ENCODE measurements at regions of chr5 and their contacts with region 1.

Region 1: DNA sequence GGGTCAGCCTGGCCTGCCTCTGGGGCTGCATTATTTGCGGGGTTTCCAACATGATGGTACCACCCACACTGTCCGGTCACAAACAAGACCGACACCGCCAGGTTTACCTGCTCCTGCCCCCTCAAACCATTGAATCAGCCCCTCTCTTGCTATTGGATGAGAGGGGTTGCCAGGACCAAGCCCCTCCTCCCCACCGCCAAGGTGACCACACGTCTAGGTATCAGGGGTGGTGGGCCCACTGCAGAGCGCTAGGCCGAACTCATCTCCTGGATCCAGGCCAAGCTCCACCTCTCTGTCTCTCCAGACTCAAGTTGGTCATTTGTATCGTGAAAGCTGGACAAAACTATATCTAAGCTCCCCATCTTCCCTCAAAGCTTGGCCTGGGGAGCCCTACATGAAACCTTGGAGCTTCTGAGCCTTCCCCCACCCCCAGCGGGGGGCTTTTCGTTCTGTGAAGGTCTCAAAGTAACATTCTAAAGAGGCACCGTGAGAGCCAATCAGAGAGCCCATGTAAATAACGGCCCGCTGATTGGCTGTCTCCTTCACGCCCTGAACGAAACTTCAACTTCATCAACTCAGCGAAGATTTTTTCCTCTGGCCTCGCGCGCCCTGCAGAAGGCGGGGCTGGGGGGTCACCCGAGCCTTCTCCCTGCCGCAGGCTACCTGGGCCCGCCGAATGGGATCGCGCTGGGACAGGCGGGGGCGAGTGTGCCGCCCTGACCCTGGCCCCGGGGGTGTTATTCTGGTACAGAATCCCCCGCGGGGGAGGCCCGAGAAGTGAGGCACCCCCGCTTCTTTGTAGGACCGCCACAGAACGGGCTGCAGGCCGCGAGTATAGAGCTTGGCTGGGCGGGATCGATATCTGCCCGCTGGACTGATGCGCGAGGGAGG is 49.6 kb upstream of the PSD2 start:
- H3K4me3 Mint-ChIP-seq: no peak overlapping the region
- H3K27ac Mint-ChIP-seq: no peak overlapping the region
- H3K4me1 Mint-ChIP-seq: peaks cover 53% of the 10 kb centered on the region
- H3K27me3 Mint-ChIP-seq: peaks cover 85% of the 10 kb centered on the region

Region 2: DNA sequence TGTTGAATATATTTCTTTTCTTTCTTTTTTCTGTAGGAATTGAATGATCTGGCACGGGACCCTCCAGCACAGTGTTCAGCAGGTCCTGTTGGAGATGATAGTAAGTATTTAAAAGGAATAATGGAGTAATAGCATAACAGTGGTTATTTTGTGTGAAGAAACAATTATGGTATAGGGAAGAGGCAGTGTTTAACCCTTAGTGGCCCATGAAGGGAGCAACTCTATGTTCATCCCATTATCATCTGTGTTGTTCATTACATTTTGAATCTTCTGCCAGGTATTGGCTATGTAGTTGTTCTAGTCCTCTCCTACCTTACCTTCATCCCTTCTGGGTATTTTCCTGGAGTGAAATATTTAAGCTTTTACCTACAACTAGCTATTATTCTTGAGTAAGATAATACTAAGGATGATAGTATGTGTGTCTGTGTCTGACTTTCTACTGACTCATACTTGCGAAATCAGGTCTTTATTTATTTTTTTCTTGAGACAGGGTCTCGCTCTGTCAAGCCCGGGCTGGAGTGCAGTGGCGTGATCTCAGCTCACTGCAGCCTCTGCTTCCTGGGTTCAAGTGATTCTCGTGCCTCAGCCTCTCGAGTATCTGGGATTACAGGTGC is 145.6 kb before region 1 on chr5:
- intact Hi-C with region 1: no loop called
- H3K4me3 Mint-ChIP-seq: no peak overlapping the region
- H3K27ac Mint-ChIP-seq: no peak overlapping the region
- H3K4me1 Mint-ChIP-seq: no peaks in the 10 kb centered on the region
- H3K27me3 Mint-ChIP-seq: no peaks in the 10 kb centered on the region

Region 3: GRCh38 chr5:139684881-139685749 is 60.9 kb before region 1 on chr5:
- intact Hi-C with region 1: no loop called
- H3K4me3 Mint-ChIP-seq: no peak overlapping the region
- H3K27ac Mint-ChIP-seq: peak overlapping the region; percentile 0
- H3K4me1 Mint-ChIP-seq: peaks cover 48% of the 10 kb centered on the region
- H3K27me3 Mint-ChIP-seq: peaks cover 15% of the 10 kb centered on the region

Region 4: DNA sequence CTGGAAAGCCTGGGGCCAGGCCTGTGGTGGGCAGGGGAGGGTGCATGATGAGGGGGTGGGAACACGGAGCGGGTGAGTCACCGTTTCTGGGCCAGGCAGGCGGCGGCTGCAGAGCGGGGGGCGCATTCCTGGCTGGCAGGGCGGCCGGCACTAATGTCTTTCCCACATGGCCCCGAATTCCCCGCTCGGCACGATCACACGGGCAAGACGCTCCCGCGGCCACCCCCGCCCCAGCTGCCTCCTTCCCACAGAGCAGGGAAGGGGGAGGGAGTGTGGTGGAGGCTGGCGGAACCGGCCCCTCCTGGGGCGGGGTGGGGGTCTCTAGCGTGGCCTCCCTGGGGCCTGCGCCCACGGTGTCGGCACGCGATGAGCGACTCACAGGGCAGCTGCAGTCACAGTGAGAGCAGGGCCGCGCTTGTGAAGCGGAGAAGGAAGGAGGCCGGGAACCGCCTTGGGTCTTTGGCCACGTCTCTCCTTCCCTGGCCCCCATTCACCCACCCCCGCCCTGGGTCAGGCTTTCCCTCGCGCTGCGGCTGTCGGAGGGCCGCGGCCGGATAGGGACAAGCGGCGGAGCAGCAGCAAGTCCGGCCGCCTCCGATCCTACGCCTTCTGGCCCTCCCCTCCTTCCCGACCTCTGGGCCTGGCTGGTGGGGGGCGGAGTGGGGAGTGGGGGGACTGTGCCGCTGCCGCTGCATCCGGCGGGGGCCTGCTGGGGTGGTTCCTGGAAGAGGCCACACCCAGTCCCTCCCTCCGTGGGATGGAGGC is 49.0 kb before region 1 on chr5:
- intact Hi-C with region 1: loop called (anchors 5 kb)
- H3K4me3 Mint-ChIP-seq: peak overlapping the region; percentile 67
- H3K27ac Mint-ChIP-seq: peak overlapping the region; percentile 75
- H3K4me1 Mint-ChIP-seq: peaks cover 73% of the 10 kb centered on the region
- H3K27me3 Mint-ChIP-seq: peaks cover 54% of the 10 kb centered on the region

Region 5: DNA sequence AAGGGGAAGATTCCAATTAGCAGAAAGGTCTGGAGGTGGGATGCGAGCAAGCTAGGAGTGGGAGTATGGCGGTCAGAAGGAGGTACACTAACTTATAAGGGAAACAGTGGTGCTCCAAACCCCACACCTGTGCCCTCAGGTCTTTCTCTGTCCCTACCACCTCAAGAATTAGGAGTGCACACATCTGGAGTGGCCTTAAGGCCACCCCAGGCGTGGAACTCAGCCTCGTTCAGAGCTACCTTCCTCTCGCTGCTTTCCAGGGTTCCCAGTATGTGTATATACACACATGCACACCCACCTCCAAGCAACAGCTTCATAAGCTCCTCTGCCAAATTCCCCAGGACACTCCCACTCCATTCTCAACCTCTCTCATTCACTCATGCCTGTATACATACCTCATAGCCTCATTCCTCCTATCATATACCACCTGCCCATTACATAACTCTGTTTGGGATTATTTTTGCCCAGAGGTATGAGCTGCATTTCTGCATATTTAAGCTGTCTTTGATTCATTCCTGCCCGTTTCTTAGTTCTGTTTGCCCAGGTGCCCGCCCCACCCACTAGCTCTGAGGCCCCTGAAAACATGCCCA is 168.3 kb after region 1 on chr5:
- intact Hi-C with region 1: no loop called
- H3K4me3 Mint-ChIP-seq: no peak overlapping the region
- H3K27ac Mint-ChIP-seq: no peak overlapping the region
- H3K4me1 Mint-ChIP-seq: no peaks in the 10 kb centered on the region
- H3K27me3 Mint-ChIP-seq: peaks cover 16% of the 10 kb centered on the region

Measured in dendritic cell treated with granulocyte-macrophage colony-stimulating factor and Interleukin-4, amounts not matched to agents 40 ng/mL and 50 ng/mL, for 4 days (primary cell).